PC-3 (cell line): ENCODE measurements at regions of chr2 and their contacts with region 1.

Region 1: GRCh38 chr2:104033399-104033798 is 820.5 kb upstream of the POU3F3 start:
- DNase-seq: peak; percentile 36
- ATAC-seq: no peak
- H3K4me3 ChIP-seq: no peak overlapping the region
- H3K27ac ChIP-seq: no peak overlapping the region
- H3K4me1 ChIP-seq: no peaks in the 10 kb centered on the region
- H3K27me3 ChIP-seq: 0 out of 2 replicates have a peak, but pooled peaks cover 6% of the 10 kb centered on the region
- CTCF ChIP-seq: peak; percentile 68

Region 2: GRCh38 chr2:104023306-104023705 is 10.1 kb before region 1 on chr2:
- CTCF ChIA-PET with region 1: no interaction called
- POLR2A ChIA-PET with region 1: no interaction called
- intact Hi-C with region 1: no loop called
- DNase-seq: no peak
- ATAC-seq: no peak
- H3K4me3 ChIP-seq: no peak overlapping the region
- H3K27ac ChIP-seq: no peak overlapping the region
- H3K4me1 ChIP-seq: no peaks in the 10 kb centered on the region
- H3K27me3 ChIP-seq: peaks cover 74% of the 10 kb centered on the region
- CTCF ChIP-seq: no peak

Region 3: DNA sequence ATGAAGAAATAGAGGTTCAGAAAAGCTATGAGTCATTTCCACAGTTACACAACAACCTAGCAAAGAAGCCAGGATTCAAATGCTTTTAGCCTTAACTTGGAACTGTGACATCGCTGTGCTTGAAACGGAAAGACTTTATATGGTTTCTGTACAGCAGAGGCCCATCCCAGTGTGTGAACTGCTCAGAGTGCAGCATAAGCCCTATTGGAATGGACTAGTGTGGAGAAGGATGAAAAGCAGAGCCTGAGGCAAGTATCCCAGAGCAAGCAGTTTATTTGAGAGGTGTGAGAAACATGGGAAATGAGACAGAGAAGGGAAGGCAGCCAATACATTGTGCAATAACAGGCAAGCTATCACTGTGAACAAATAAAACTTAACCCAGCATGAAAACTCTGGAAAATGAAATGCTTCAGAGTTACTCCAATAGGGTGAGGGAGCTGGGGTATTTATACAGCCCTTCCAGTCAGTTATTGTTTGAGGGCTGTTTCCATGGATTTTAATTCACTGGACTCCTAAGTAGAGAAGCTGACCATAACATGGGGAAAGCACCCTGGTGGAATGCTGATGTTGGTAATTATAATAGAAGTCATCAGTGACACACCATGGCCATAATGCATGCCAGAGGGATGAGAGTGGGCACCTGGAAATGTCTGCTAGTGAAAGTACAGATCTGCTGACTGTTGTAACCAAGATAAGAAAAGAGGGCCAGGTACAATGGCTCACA is 566.5 kb after region 1 on chr2:
- CTCF ChIA-PET with region 1: no interaction called
- POLR2A ChIA-PET with region 1: no interaction called
- intact Hi-C with region 1: no loop called
- DNase-seq: no peak
- ATAC-seq: no peak
- H3K4me3 ChIP-seq: no peak overlapping the region
- H3K27ac ChIP-seq: no peak overlapping the region
- H3K4me1 ChIP-seq: no peaks in the 10 kb centered on the region
- H3K27me3 ChIP-seq: no peaks in the 10 kb centered on the region
- CTCF ChIP-seq: no peak

Region 4: DNA sequence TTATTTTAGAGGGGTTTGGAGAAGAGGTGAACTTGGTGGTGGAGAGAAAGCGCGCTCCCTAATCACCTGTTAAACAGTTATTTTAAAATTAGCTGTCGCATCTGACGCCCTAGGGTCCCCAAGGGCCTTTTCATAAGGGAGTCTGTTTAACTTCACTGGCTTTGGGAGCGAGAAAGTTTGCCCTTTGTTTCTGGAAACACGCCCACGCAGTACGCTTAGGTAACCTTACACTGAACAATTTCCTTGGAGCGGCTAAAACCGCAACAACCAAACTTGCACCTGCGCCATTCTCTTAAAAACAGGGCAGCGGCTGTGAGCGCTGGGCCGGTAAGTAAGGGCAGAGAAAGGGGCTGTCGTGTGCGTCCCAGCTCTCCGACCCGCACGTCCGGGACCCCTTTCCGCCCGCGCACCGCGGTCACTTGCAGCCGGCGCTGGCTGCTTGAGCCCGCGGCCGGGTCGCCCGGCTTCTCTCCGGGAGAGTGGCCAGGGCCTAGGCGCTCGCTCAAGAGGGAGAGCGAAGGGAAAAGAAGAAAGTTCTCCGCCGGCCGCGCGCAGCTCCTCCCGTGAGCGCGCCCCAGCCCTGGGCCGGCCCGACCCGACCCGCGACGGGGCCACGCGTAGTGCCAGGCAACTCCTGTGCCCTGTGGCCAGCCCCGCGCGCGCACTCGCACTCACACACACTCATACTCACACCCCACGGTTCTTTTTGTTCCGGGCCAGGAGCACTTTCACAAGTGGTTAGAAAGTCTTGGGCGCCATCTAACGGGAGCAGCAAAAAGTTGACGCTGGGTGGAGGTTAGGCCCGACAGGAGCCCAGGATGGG is 839.7 kb after region 1 on chr2:
- CTCF ChIA-PET with region 1: no interaction called
- POLR2A ChIA-PET with region 1: no interaction called
- intact Hi-C with region 1: loop called (anchors 2 kb)
- DNase-seq: peak; percentile 67
- ATAC-seq: peak; percentile 94
- H3K4me3 ChIP-seq: peak overlapping the region; percentile 70
- H3K27ac ChIP-seq: no peak overlapping the region
- H3K4me1 ChIP-seq: peaks cover 5% of the 10 kb centered on the region; the same call in 1 of the 2 replicates
- H3K27me3 ChIP-seq: peaks cover 73% of the 10 kb centered on the region
- CTCF ChIP-seq: peak; percentile 75

Region 5: GRCh38 chr2:104944495-104944894 is 911.1 kb after region 1 on chr2:
- CTCF ChIA-PET with region 1: no interaction called
- POLR2A ChIA-PET with region 1: no interaction called
- intact Hi-C with region 1: loop called (anchors 10 kb)
- DNase-seq: peak; percentile 70
- ATAC-seq: no peak; the same call in 1 of the 2 replicates
- H3K4me3 ChIP-seq: no peak overlapping the region
- H3K27ac ChIP-seq: no peak overlapping the region
- H3K4me1 ChIP-seq: peaks cover 4% of the 10 kb centered on the region; the same call in 1 of the 2 replicates
- H3K27me3 ChIP-seq: peaks cover 43% of the 10 kb centered on the region
- CTCF ChIP-seq: peak; percentile 80